ENCODE measurements at regions of chr15 and their contacts with region 1.

Region 1: GRCh38 chr15:85318048-85318731 is 62.2 kb upstream of the AKAP13 start:
- DNase-seq: peak; percentile 41
- H3K4me3 Mint-ChIP-seq: peak overlapping the region; percentile 38
- H3K27ac Mint-ChIP-seq: peak overlapping the region; percentile 87
- H3K4me1 Mint-ChIP-seq: peaks cover 59% of the 10 kb centered on the region
- H3K27me3 Mint-ChIP-seq: no peaks in the 10 kb centered on the region

Region 2: GRCh38 chr15:85330901-85331588 is 12.9 kb after region 1 on chr15:
- intact Hi-C with region 1: loop called (anchors 1 kb)
- DNase-seq: peak; percentile 72
- H3K4me3 Mint-ChIP-seq: peak overlapping the region; percentile 88
- H3K27ac Mint-ChIP-seq: peak overlapping the region; percentile 92
- H3K4me1 Mint-ChIP-seq: peaks cover 51% of the 10 kb centered on the region
- H3K27me3 Mint-ChIP-seq: no peaks in the 10 kb centered on the region

Region 3: GRCh38 chr15:85380217-85380811 is 62.1 kb after region 1 on chr15 and contains the start of gene AKAP13:
- intact Hi-C with region 1: loop called (anchors 1 kb)
- DNase-seq: peak; percentile 93
- H3K4me3 Mint-ChIP-seq: peak within 1 kb of the TSS; percentile 90
- H3K27ac Mint-ChIP-seq: peak within 1 kb of the TSS; percentile 94
- H3K4me1 Mint-ChIP-seq: peaks cover 68% of the 10 kb centered on the region
- H3K27me3 Mint-ChIP-seq: peaks cover 2% of the 10 kb centered on the region
- total RNA-seq, gene AKAP13: 78.9 and 81.9 TPM in 2 replicates

Region 4: GRCh38 chr15:85625856-85626255 is 307.7 kb after region 1 on chr15:
- intact Hi-C with region 1: loop called (anchors 5 kb)
- DNase-seq: peak; percentile 35
- H3K4me3 Mint-ChIP-seq: peak overlapping the region; percentile 41
- H3K27ac Mint-ChIP-seq: peak overlapping the region; percentile 89
- H3K4me1 Mint-ChIP-seq: peaks cover 56% of the 10 kb centered on the region
- H3K27me3 Mint-ChIP-seq: no peaks in the 10 kb centered on the region

Region 5: DNA sequence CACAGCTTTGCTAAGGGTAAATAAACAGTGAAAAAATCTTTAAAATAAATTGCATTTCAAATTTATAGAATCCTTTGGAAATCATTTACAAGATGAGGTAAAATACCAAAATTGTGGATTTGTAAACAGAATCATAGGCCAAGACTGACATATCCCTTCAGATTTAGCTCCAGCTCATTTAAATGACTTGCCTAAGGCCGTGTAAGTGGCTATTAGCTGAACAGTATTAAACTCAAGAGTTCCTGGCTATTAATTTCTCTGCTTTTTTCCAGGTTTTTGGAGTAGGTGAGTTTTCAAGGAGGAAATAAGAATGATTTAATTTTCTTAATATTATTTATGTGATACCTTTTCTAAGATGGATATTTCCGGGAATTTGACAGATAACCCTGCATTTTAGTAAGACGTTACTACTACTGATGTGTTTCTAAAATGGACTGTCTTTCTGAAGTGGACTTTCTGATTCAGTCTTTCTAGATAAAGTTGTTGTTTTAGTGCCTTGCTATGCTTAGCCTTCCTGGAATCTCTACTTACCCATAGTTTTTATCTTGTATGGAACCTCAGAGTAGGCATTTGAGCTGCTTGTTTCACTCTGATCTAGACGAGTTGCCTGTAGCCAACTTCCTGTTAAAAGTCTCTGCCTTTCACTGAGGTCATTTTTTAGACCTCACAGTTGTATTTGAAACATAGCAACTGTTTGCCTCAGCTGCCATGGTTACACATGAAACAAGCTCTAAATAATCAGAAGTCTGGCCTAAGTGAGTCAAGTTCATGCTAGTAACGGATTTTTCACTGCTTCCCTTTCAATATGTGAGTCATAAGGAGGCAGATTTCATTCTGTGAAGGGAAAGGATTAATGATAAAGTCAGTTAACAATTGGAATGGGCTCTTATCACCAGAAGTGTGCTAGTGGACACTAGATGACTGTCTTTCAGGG is 349.6 kb after region 1 on chr15:
- intact Hi-C with region 1: loop called (anchors 1 kb)
- DNase-seq: peak; percentile 46
- H3K4me3 Mint-ChIP-seq: peak overlapping the region; percentile 20
- H3K27ac Mint-ChIP-seq: peak overlapping the region; percentile 97
- H3K4me1 Mint-ChIP-seq: peaks cover 22% of the 10 kb centered on the region
- H3K27me3 Mint-ChIP-seq: no peaks in the 10 kb centered on the region

Region 6: DNA sequence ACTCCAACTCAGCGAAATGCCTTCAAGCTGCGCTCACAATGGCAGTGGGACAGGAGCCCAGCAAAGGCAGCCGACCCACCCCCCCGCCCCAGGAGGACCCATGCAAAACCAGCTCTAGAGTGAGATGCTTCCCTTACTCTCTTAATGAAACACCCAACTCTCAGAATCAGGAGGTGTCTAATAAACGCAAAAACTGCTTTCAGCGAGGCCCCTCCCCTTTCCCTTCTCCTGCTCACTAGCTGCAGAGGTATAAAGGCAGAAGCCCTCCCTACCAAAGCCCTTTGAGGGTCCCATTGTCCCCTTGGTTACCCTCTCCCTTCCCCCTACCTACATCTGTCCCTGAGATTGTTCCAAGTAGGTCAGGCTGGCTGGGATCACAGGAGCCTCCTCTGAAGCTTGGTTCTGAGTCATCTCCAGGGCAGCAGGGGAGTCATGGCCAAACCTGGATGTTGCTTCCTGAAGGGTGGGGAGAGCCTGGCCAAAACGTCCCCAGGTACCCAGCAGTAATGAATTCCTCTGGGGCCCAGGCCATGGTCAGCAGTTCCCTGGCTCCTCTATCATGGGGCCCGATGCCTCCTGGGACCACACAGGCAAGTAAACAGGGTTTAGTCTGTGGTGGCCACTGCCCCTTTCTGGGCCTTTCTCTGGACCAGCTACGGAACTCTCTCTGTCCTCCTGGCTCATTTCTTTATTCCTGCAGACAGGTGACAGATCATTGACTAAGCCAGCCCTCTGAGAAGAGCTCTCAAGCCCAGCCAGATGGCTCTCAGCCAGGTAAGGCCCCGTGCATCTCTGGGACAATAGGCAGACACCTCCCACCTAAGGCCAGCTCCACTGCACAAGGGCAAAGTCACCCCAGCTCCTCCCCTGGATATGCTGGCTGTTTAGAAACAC is 467.9 kb after region 1 on chr15:
- intact Hi-C with region 1: loop called (anchors 10 kb)
- DNase-seq: no peak
- H3K4me3 Mint-ChIP-seq: peak overlapping the region; percentile 68
- H3K27ac Mint-ChIP-seq: peak overlapping the region; percentile 86
- H3K4me1 Mint-ChIP-seq: peaks cover 52% of the 10 kb centered on the region
- H3K27me3 Mint-ChIP-seq: no peaks in the 10 kb centered on the region

Measured in activated T-helper 1 cell treated with anti-CD3 and anti-CD28 coated beads, Interleukin-12 subunit alpha, Interleukin-12 subunit beta, Interleukin-2, Interleukin-4 antibody, amounts not matched to agents 30 ng/mL and 10 ng/mL and 1 ng/mL, durations not matched to agents 14 hours and 24 hours and 36 hours (primary cell).